Mammary epithelial cell (primary cell): ENCODE measurements at regions of chr6 and their contacts with region 1.

Region 1: GRCh38 chr6:28443112-28443773 is at the start of gene ZSCAN23:
- DNase-seq: peak; percentile 84
- H3K4me3 ChIP-seq: peak within 1 kb of the TSS; percentile 68 to 85 (median 75)
- H3K27ac ChIP-seq: peak within 1 kb of the TSS; percentile 66
- H3K4me1 ChIP-seq: peaks cover 19% of the 10 kb centered on the region
- H3K27me3 ChIP-seq: no peaks in the 10 kb centered on the region
- CTCF ChIP-seq: peak in 1 of 2 donors; percentile 6
- total RNA-seq, gene ZSCAN23: 4.2 to 7.2 TPM

Region 2: GRCh38 chr6:28399350-28400121 is 43.7 kb before region 1 on chr6 and contains the start of gene ZSCAN12:
- CTCF ChIA-PET with region 1: no interaction called
- dilution Hi-C with region 1: no loop called
- in situ Hi-C with region 1: no loop called
- intact Hi-C with region 1: loop called (anchors 1 kb)
- DNase-seq: peak; percentile 79
- H3K4me3 ChIP-seq: peak within 1 kb of the TSS; percentile 76 to 91 (median 78)
- H3K27ac ChIP-seq: peak within 1 kb of the TSS; percentile 84
- H3K4me1 ChIP-seq: peaks cover 27% of the 10 kb centered on the region
- H3K27me3 ChIP-seq: no peaks in the 10 kb centered on the region
- CTCF ChIP-seq: peak; percentile 43 to 75
- total RNA-seq, gene ZSCAN12: 5.3 to 8.5 TPM